PC-3 (cell line): ENCODE measurements at regions of chr5 and their contacts with region 1.

Region 1: DNA sequence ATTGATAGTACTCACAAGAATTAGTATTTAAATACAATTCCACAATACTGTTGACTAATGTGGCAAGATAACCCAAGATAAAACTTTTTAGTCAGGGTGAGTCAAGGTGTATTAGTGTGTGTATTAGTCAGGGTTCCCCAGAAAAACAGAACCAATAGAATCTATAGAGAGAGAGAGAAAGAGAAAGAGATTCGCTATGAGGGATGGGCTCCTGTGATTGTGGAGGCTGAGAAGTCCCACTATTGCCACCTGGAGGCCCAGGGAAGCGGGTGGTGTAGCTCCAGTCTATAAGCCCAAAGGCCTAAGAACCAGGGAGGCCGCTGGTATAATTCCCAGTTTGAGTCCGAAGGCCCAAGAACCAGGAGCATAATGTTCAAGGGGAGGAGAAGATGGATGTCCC is 10.0 kb upstream of the SHISAL2B start:
- DNase-seq: peak; percentile 31
- ATAC-seq: peak; percentile 48; the same call in 1 of the 2 replicates
- H3K4me3 ChIP-seq: no peak overlapping the region
- H3K27ac ChIP-seq: no peak overlapping the region
- H3K4me1 ChIP-seq: no peaks in the 10 kb centered on the region
- H3K27me3 ChIP-seq: no peaks in the 10 kb centered on the region
- CTCF ChIP-seq: peak; percentile 43; the same call in 1 of the 2 replicates

Region 2: GRCh38 chr5:64331597-64332277 is 348.6 kb before region 1 on chr5:
- CTCF ChIA-PET with region 1: no interaction called
- POLR2A ChIA-PET with region 1: no interaction called
- intact Hi-C with region 1: no loop called
- DNase-seq: no peak
- ATAC-seq: no peak
- H3K4me3 ChIP-seq: no peak overlapping the region
- H3K27ac ChIP-seq: no peak overlapping the region
- H3K4me1 ChIP-seq: no peaks in the 10 kb centered on the region
- H3K27me3 ChIP-seq: no peaks in the 10 kb centered on the region
- CTCF ChIP-seq: no peak

Region 3: DNA sequence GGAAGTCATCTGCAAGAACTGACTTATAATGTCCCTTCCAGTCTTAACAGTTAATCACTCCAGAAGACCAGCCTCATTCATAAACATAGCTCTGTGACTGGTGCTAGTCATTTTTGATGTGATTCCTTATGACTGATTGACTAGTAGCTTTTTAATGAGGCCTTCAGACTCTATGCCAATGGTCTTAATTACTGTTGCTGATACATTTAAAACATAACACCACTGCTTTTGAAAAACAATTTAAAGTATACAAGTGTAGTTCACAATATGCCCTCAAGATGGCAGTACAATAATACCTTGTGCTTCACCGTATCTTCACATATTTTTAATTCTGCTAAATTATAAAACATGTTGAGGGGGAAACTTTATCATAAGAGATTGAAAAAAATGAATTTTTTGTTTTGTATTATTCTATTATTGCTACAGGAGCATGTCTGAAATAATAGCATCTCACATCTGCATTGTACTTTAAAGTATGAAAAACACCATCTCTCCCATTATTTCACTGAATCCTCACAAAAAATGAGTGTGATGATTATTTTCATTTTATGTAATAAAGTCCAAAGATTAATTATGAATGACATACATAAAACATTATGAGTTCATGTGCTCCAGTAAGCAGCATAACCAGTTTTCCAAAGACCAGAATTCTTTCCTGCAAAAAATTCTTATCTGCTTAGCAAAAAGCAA is 45.1 kb before region 1 on chr5:
- CTCF ChIA-PET with region 1: no interaction called
- POLR2A ChIA-PET with region 1: no interaction called
- intact Hi-C with region 1: loop called (anchors 1 kb)
- DNase-seq: peak; percentile 54
- ATAC-seq: no peak
- H3K4me3 ChIP-seq: no peak overlapping the region
- H3K27ac ChIP-seq: no peak overlapping the region
- H3K4me1 ChIP-seq: no peaks in the 10 kb centered on the region
- H3K27me3 ChIP-seq: no peaks in the 10 kb centered on the region
- CTCF ChIP-seq: peak; percentile 79

Region 4: GRCh38 chr5:65035211-65036206 is 355.2 kb after region 1 on chr5:
- CTCF ChIA-PET with region 1: no interaction called
- POLR2A ChIA-PET with region 1: no interaction called
- intact Hi-C with region 1: no loop called
- DNase-seq: peak; percentile 80
- ATAC-seq: peak; percentile 90
- H3K4me3 ChIP-seq: peak overlapping the region; percentile 69
- H3K27ac ChIP-seq: peak overlapping the region; percentile 89
- H3K4me1 ChIP-seq: peaks cover 14% of the 10 kb centered on the region
- H3K27me3 ChIP-seq: no peaks in the 10 kb centered on the region
- CTCF ChIP-seq: no peak